Activated CD8-positive, alpha-beta T cell treated with anti-CD3 and anti-CD28 coated beads for 36 hours (primary cell): ENCODE measurements at regions of chr2 and their contacts with region 1.

Region 1: DNA sequence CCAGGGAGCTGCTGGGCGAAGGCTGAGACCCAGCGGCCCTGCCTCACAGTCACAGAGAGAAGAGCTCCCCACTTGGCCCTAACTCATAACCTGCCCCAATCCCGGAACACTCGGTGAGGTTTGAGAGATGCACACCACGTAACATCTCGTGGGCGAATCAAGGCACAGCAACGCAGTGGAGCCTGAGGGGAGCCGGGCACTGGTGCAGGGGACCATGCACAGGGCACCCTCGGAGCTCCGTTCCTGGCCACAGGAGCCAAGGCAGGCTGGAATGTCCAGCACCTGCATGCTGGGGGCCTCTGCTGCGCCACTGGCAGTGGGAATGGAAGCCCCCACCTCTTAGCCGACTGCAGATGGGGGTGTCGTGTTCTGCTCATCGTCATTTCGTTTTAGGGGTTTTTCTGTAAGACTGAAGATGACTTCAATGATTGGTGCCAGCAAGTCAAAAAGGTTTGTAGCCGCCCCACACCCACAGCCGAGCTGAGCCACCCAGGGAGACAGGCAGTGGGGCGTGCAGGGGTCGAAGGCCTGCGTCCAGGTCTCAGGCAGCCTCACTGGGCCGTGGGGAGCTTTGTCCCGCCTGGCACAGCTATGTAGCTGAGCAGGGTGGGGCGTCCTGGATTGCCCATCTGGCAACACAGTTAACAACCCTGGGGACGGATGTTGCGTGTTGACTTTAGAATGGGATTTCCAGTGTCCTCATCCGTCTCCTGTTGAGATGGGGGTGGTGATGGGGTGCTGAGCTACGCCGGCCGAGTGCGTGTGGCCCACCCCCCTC is 16.1 kb downstream of the DTYMK start:
- DNase-seq: no peak
- ATAC-seq: no peak
- H3K4me3 Mint-ChIP-seq: no peak overlapping the region
- H3K27ac Mint-ChIP-seq: no peak overlapping the region
- H3K4me1 Mint-ChIP-seq: peaks cover 8% of the 10 kb centered on the region
- H3K27me3 Mint-ChIP-seq: no peaks in the 10 kb centered on the region
- CTCF ChIP-seq: no peak

Region 2: DNA sequence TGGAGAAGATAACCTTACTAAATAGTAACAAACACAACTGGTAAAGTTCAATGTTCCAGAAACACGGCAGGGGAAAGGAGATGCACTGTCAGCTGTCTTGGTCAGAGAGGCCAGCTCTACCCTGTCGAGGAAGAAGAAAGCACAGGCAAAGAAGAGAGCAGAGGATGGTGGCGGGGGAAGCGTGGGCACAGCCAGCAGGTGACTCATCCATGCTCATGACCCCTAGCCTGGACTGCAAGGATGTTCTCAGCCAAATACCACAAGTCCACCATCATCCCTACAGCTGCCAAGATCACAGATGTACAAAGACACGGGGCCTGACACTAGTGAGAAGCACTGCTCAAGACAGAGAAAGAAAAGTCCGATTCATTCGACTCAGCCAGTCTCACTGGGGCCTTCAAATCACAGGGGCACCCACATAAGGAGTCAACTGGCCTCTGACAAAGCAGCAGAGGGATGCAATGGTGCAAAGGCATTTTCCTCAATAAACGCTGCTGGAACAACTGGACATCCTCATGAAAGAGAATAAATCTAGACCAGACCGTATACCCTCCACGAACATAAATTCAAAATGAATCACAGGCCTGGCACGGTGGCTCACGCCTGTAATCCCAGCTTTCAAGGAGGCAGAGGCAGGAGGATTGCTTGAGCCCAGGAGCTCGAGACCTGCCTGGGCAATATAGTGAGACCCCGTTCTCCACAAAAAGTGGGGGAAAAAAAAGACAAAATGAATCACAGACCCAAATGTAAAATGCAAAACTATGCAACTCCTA is 10.5 kb after region 1 on chr2:
- CTCF ChIA-PET with region 1: interaction called, 3 read pairs
- POLR2A ChIA-PET with region 1: interaction called, 10 read pairs
- intact Hi-C with region 1: no loop called
- DNase-seq: no peak
- ATAC-seq: no peak
- H3K4me3 Mint-ChIP-seq: no peak overlapping the region
- H3K27ac Mint-ChIP-seq: peak overlapping the region; percentile 55
- H3K4me1 Mint-ChIP-seq: peaks cover 16% of the 10 kb centered on the region
- H3K27me3 Mint-ChIP-seq: no peaks in the 10 kb centered on the region
- CTCF ChIP-seq: no peak

Region 3: GRCh38 chr2:241695651-241696050 is 25.1 kb after region 1 on chr2:
- CTCF ChIA-PET with region 1: no interaction called
- POLR2A ChIA-PET with region 1: no interaction called
- intact Hi-C with region 1: no loop called
- DNase-seq: no peak
- ATAC-seq: no peak
- H3K4me3 Mint-ChIP-seq: no peak overlapping the region
- H3K27ac Mint-ChIP-seq: no peak overlapping the region
- H3K4me1 Mint-ChIP-seq: peaks cover 14% of the 10 kb centered on the region
- H3K27me3 Mint-ChIP-seq: no peaks in the 10 kb centered on the region
- CTCF ChIP-seq: no peak